ENCODE measurements at regions of chr17 and their contacts with region 1.

Region 1: GRCh38 chr17:75784473-75785015 is at the start of gene UNK:
- DNase-seq: peak; percentile 99
- ATAC-seq: peak; percentile 71
- H3K4me3 ChIP-seq: peak within 1 kb of the TSS; percentile 68
- H3K27ac ChIP-seq: peak within 1 kb of the TSS; percentile 93
- H3K4me1 ChIP-seq: peaks cover 49% of the 10 kb centered on the region
- H3K27me3 ChIP-seq: no peaks in the 10 kb centered on the region
- CTCF ChIP-seq: no peak
- total RNA-seq, gene UNK: 21.8 and 22.9 TPM in 2 replicates

Region 2: DNA sequence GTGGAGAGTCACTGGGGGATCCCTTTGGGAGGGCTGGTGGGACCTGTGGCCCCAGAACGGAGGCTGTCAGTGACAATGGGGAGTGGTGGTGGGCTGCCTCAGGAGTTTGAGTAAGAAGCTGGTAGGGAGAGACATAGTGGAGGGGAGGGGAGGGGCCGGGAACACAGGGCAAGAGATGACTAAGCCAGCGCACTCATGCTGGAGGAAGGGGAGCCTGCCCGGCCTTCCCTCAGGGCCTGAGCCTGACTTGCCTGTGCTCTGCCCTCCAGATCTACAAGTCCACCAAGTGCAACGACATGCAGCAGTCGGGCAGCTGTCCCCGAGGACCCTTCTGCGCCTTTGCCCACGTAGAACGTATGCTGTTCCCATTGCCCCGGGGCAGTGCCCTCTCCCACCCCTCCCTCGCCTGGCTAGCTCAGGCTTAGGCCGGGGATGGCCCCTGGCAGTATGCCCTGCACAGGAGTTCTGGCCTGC is 30.4 kb after region 1 on chr17:
- CTCF ChIA-PET with region 1: interaction called, 3 read pairs
- POLR2A ChIA-PET with region 1: no interaction called
- intact Hi-C with region 1: loop called (anchors 2 kb)
- DNase-seq: peak; percentile 90
- ATAC-seq: peak; percentile 100
- H3K4me3 ChIP-seq: no peak overlapping the region
- H3K27ac ChIP-seq: peak overlapping the region; percentile 63
- H3K4me1 ChIP-seq: peaks cover 12% of the 10 kb centered on the region
- H3K27me3 ChIP-seq: no peaks in the 10 kb centered on the region
- CTCF ChIP-seq: no peak

Region 3: DNA sequence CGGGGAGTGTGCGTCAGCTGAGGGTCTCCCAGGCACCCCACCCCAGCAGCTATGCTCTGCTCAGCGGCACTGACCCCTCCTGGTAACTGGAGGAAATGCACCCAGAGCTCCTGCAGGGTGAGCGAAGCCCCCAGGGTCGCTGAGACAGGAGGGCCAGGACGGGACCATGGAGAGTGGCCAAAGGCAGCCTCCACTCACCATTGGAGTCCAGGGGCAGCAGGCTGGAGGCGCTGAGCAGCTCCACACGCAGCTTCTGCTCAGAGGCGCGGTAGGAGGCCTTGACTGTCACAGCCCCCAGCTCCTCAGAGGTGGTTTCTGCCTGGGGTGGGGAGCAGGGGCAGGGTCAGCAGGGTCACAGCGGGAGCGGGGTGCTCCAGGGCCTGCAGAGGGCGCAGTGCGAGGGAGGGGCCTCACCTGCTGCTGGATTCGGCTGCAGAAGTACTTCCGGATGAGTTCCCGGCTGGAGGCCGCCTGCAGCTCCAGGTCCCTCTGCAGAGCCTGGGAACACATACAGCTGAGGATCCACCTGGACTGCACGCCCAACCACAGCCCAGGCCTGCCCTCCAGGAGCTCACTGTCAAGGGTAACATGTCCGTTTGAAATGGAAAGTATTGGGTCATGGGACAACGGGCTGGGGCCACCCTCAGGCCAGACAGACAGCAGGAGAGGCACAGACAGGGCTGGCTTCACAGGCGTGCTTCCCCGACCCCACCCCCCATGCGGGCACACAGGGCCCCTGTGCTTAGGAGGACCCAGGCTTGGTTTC is 45.8 kb after region 1 on chr17:
- CTCF ChIA-PET with region 1: interaction called, 4 read pairs
- POLR2A ChIA-PET with region 1: interaction called, 3 read pairs
- intact Hi-C with region 1: loop called (anchors 5 kb)
- DNase-seq: peak; percentile 19
- ATAC-seq: no peak
- H3K4me3 ChIP-seq: no peak overlapping the region
- H3K27ac ChIP-seq: no peak overlapping the region
- H3K4me1 ChIP-seq: peaks cover 9% of the 10 kb centered on the region
- H3K27me3 ChIP-seq: no peaks in the 10 kb centered on the region
- CTCF ChIP-seq: peak; percentile 83

Region 4: GRCh38 chr17:75845049-75845860 is 60.7 kb after region 1 on chr17:
- CTCF ChIA-PET with region 1: interaction called, 10 read pairs
- POLR2A ChIA-PET with region 1: interaction called, 10 read pairs
- intact Hi-C with region 1: no loop called
- DNase-seq: peak; percentile 96
- ATAC-seq: peak; percentile 77
- H3K4me3 ChIP-seq: peak overlapping the region; percentile 49
- H3K27ac ChIP-seq: peak overlapping the region; percentile 96
- H3K4me1 ChIP-seq: peaks cover 39% of the 10 kb centered on the region
- H3K27me3 ChIP-seq: no peaks in the 10 kb centered on the region
- CTCF ChIP-seq: peak; percentile 89

Region 5: DNA sequence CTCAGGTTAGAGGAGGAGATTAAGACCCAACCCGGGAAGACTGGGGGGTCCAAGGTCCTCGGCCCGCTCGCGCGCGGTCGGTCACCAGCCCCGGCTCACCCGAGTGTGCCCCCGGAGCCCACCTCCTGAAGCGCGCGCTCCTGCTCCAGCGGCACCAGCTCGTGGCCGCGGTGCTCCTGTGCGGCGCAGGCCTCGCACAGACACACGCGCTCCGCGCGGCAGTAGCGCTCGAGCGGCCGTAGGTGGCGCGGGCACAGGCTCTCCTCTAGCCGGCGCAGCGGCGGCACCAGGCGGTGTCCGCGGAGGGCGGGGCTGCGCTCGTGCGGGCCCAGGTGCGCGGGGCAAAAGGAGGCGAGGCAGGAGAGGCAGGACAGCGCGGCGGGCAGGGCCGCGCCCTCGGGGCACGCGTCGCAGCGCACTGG is 93.2 kb after region 1 on chr17:
- CTCF ChIA-PET with region 1: interaction called, 9 read pairs
- POLR2A ChIA-PET with region 1: interaction called, 15 read pairs
- intact Hi-C with region 1: loop called (anchors 2 kb)
- DNase-seq: peak; percentile 88
- ATAC-seq: peak; percentile 64
- H3K4me3 ChIP-seq: peak overlapping the region; percentile 71
- H3K27ac ChIP-seq: peak overlapping the region; percentile 92
- H3K4me1 ChIP-seq: peaks cover 24% of the 10 kb centered on the region
- H3K27me3 ChIP-seq: no peaks in the 10 kb centered on the region
- CTCF ChIP-seq: peak; percentile 40

Region 6: GRCh38 chr17:75888511-75888910 is 104.0 kb after region 1 on chr17:
- CTCF ChIA-PET with region 1: no interaction called
- POLR2A ChIA-PET with region 1: interaction called, 16 read pairs
- intact Hi-C with region 1: no loop called
- DNase-seq: no peak
- ATAC-seq: no peak
- H3K4me3 ChIP-seq: no peak overlapping the region
- H3K27ac ChIP-seq: no peak overlapping the region
- H3K4me1 ChIP-seq: no peaks in the 10 kb centered on the region
- H3K27me3 ChIP-seq: no peaks in the 10 kb centered on the region
- CTCF ChIP-seq: no peak

Region 7: GRCh38 chr17:75896415-75897159 is 112.0 kb after region 1 on chr17 and contains the start of gene TRIM65:
- CTCF ChIA-PET with region 1: interaction called, 3 read pairs
- POLR2A ChIA-PET with region 1: no interaction called
- intact Hi-C with region 1: loop called (anchors 5 kb)
- DNase-seq: peak; percentile 91
- ATAC-seq: peak; percentile 87
- H3K4me3 ChIP-seq: peak within 1 kb of the TSS; percentile 83
- H3K27ac ChIP-seq: peak within 1 kb of the TSS; percentile 74
- H3K4me1 ChIP-seq: peaks cover 14% of the 10 kb centered on the region
- H3K27me3 ChIP-seq: no peaks in the 10 kb centered on the region
- CTCF ChIP-seq: peak; percentile 40
- total RNA-seq, gene TRIM65: 32.3 and 48.9 TPM in 2 replicates

Measured in PC-3 (cell line).